AG04449 (cell line): ENCODE measurements at regions of chr7 and their contacts with region 1.

Region 1: DNA sequence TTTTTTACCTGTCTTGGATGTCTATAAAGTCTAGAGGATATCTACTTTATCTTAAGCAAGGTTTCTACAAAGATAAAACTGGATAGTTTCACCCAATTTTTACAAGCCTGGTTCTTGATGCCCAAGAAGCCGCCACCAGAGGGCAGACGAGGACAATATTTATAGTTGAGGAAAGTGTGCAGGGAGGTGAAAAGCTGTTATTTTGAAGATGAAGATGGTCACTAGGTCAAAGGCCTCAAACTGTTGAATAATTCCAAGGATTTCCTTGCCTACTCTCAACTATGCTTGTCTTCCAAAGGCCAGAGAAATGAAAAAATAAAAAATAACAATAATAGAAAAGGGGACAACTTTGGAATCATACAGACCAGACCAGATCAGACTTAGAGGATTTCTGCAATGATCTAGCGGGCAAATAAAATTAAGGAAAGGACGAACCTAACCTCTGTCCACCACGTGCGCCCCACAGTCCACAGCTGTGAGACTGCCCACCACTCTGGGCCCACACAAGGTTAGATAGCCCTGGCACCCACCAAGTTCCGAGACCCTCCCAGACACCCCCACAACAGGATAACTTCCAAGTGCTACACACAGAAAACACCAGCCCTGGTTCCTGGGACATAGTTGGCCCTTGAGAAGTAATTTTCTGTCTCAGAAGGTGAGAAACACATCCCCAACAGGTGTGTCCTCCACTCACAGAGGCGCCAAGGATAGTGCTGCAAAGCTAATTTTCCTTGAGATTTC is 2.8 kb downstream of the PKD1L1 start:
- DNase-seq: no peak
- H3K4me3 ChIP-seq: no peak overlapping the region
- CTCF ChIP-seq: peak; percentile 49

Region 2: GRCh38 chr7:47932016-47932415 is 13.4 kb before region 1 on chr7:
- CTCF ChIA-PET with region 1: interaction called, 32 read pairs
- POLR2A ChIA-PET with region 1: no interaction called
- DNase-seq: no peak
- H3K4me3 ChIP-seq: no peak overlapping the region
- CTCF ChIP-seq: no peak

Region 3: GRCh38 chr7:47968847-47969774 is 23.7 kb after region 1 on chr7:
- CTCF ChIA-PET with region 1: interaction called, 286 read pairs
- POLR2A ChIA-PET with region 1: no interaction called
- DNase-seq: no peak
- H3K4me3 ChIP-seq: no peak overlapping the region
- CTCF ChIP-seq: peak; percentile 90

Region 4: GRCh38 chr7:47979145-47979831 is 33.9 kb after region 1 on chr7 and contains the start of gene HUS1:
- CTCF ChIA-PET with region 1: interaction called, 286 read pairs
- POLR2A ChIA-PET with region 1: no interaction called
- DNase-seq: no peak
- H3K4me3 ChIP-seq: peak within 1 kb of the TSS; percentile 78
- CTCF ChIP-seq: no peak

Region 5: DNA sequence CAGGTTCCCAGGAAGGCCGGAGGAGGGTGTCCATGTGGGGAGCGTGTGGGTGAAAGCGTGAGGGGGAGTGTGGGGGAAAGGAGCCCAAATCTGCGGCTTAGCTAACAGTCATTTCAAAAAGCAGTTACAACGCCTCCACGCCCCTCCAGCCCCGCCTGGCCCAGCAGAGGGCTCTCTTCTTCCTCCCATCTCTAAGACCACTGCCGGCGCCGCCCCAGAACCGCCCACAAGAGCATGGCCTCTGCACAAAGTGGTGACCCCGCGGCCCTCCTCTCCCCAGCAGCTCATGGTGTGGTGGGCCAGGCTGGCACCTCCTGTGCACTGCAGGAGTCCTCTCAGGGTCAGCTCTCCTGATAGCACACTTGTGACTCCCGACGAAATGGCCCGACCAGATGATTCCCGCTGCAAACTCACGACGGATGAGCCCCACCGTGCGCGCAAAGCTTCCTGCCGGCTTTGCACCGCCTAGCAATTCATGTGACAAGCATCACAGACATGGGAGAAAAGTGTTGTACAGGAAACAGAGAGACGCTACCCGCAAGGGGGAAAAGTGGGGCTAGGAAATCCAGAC is 46.4 kb after region 1 on chr7:
- CTCF ChIA-PET with region 1: interaction called, 15 read pairs
- POLR2A ChIA-PET with region 1: no interaction called
- DNase-seq: no peak
- H3K4me3 ChIP-seq: peak overlapping the region; percentile 63
- CTCF ChIP-seq: peak; percentile 86

Region 6: GRCh38 chr7:48101968-48102367 is 156.5 kb after region 1 on chr7:
- CTCF ChIA-PET with region 1: interaction called, 85 read pairs
- POLR2A ChIA-PET with region 1: no interaction called
- DNase-seq: no peak
- H3K4me3 ChIP-seq: no peak overlapping the region
- CTCF ChIP-seq: peak; percentile 13